Colonic mucosa (tissue), 4 donors: ENCODE measurements at regions of chr2 and their contacts with region 1.

Region 1: DNA sequence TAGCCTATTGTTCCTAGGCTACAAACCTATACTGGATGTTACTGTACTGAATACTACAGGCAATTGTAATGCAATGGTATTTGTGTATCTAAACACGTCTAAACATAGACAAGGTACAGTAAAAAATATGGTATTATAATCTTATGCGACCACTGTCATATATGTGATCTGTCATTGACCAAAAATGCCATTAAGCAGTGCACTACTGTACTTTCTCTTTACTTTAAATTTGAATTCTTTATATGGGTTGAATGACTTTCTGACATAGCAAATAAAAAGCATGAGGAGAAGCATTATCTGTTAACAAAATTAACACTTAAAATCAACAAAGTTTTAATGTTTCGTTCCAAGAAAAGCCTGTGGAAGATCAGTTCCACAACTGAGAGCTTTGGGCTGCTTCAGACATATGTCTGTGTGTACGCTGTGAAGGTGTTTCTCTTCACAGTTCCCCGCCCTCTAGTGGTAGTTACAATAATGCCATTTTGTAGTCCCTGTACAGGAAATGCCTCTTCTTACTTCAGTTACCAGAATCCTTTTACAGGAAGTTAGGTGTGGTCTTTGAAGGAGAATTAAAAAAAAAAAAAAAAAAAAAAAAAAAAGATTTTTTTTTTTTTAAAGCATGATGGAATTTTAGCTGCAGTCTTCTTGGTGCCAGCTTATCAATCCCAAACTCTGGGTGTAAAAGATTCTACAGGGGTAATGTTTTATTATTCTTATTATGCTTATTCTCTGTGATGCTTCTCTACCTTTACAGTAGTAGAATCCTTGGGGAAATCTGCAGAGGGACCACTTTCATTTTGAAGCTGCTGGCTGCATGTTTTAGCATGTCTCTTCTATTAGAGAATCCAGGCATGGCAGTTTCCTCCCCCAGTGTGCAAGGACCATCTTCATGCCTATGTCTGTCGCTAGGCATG is 54.5 kb downstream of the SCN2A start:
- DNase-seq: peak; percentile 54
- H3K4me3 ChIP-seq: no peak overlapping the region
- H3K27ac ChIP-seq: no peak overlapping the region
- H3K4me1 ChIP-seq: no peaks in the 10 kb centered on the region
- H3K27me3 ChIP-seq: no peaks in the 10 kb centered on the region
- CTCF ChIP-seq: peak; percentile 79

Region 2: GRCh38 chr2:164992818-164993217 is 300.9 kb before region 1 on chr2:
- intact Hi-C with region 1: loop called (anchors 10 kb)
- DNase-seq: peak; percentile 55
- H3K4me3 ChIP-seq: no peak overlapping the region
- H3K27ac ChIP-seq: no peak overlapping the region
- H3K4me1 ChIP-seq: no peaks in the 10 kb centered on the region
- H3K27me3 ChIP-seq: no peaks in the 10 kb centered on the region
- CTCF ChIP-seq: peak; percentile 59

Region 3: DNA sequence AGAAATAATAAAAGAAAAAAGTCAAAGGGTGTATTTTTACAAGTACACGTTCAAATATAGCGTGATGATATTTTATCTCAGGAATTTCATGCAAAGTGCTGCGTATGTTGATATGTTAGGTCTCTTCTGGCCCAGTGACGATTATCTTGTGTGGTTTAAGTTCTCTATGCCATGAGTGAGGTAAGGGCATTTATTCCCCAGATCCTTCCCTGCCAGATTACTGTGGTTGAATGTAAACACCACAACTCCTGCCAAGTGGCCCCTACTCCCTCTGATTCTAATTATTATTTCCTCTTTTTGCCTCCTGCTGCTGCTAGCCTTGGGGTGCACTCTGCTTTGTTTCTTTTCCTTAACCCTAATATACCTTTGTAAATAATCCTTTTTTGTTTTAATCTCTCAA is 42.3 kb before region 1 on chr2:
- intact Hi-C with region 1: no loop called
- DNase-seq: no peak
- H3K4me3 ChIP-seq: no peak overlapping the region
- H3K27ac ChIP-seq: no peak overlapping the region
- H3K4me1 ChIP-seq: no peaks in the 10 kb centered on the region
- H3K27me3 ChIP-seq: no peaks in the 10 kb centered on the region
- CTCF ChIP-seq: no peak